ENCODE measurements at regions of chr1 and their contacts with region 1.

Region 1: GRCh38 chr1:6401673-6402072 is 8.1 kb upstream of the ACOT7 start:
- DNase-seq: no peak
- ATAC-seq: no peak
- H3K4me3 ChIP-seq: no peak overlapping the region
- H3K4me3 Mint-ChIP-seq: no peak overlapping the region
- H3K27ac ChIP-seq: no peak overlapping the region
- H3K27ac Mint-ChIP-seq: no peak overlapping the region
- H3K4me1 ChIP-seq: no peaks in the 10 kb centered on the region
- H3K4me1 Mint-ChIP-seq: peaks cover 4% of the 10 kb centered on the region
- H3K27me3 ChIP-seq: no peaks in the 10 kb centered on the region
- H3K27me3 Mint-ChIP-seq: peaks cover 7% of the 10 kb centered on the region
- CTCF ChIP-seq: no peak

Region 2: DNA sequence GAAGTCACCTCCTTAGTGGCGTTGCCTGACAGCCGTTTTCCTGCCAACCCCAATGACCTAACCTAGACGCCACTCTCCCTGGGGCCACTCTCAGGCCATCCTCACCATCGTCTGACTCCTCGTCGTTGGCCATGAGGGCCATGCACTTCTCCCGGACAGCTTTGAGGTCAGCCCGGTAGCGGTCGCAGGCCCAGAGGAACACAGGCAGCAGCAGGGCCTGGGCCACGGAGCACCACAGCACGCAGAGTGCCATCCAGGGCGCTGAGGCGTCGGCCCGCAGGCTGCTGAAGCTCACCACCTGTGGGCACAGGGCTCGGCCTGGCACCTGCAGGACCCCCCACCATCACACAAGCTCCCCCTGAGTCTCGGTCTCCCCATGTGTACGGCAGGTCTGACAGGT is 150.4 kb before region 1 on chr1:
- CTCF ChIA-PET with region 1: interaction called, 128 read pairs
- POLR2A ChIA-PET with region 1: no interaction called
- intact Hi-C with region 1: loop called (anchors 1 kb)
- DNase-seq: no peak
- ATAC-seq: no peak
- H3K4me3 ChIP-seq: no peak overlapping the region
- H3K4me3 Mint-ChIP-seq: no peak overlapping the region
- H3K27ac ChIP-seq: no peak overlapping the region
- H3K27ac Mint-ChIP-seq: no peak overlapping the region
- H3K4me1 ChIP-seq: peaks cover 7% of the 10 kb centered on the region
- H3K4me1 Mint-ChIP-seq: peaks cover 5% of the 10 kb centered on the region
- H3K27me3 ChIP-seq: peaks cover 19 to 21% of the 10 kb centered on the region in 2 experiments
- H3K27me3 Mint-ChIP-seq: peaks cover 33% of the 10 kb centered on the region
- CTCF ChIP-seq: no peak

Region 3: GRCh38 chr1:6343506-6344405 is 57.9 kb before region 1 on chr1:
- CTCF ChIA-PET with region 1: interaction called, 82 read pairs
- POLR2A ChIA-PET with region 1: no interaction called
- intact Hi-C with region 1: loop called (anchors 1 kb)
- DNase-seq: peak; percentile 22 to 73 (median 61)
- ATAC-seq: peak; percentile 63
- H3K4me3 ChIP-seq: no peak overlapping the region
- H3K4me3 Mint-ChIP-seq: no peak overlapping the region
- H3K27ac ChIP-seq: no peak overlapping the region
- H3K27ac Mint-ChIP-seq: no peak overlapping the region
- H3K4me1 ChIP-seq: peaks cover 13% of the 10 kb centered on the region
- H3K4me1 Mint-ChIP-seq: peaks cover 10% of the 10 kb centered on the region
- H3K27me3 ChIP-seq: no peaks in the 10 kb centered on the region
- H3K27me3 Mint-ChIP-seq: no peaks in the 10 kb centered on the region
- CTCF ChIP-seq: peak; percentile 52

Region 4: GRCh38 chr1:6359216-6360116 is 42.2 kb before region 1 on chr1:
- CTCF ChIA-PET with region 1: interaction called, 110 read pairs
- POLR2A ChIA-PET with region 1: interaction called, 3 read pairs
- intact Hi-C with region 1: loop called (anchors 1 kb)
- DNase-seq: peak in 7 of 9 experiments; percentile 34 to 80 (median 63)
- ATAC-seq: peak; percentile 69
- H3K4me3 ChIP-seq: peak overlapping the region; percentile 23 to 51
- H3K4me3 Mint-ChIP-seq: peak overlapping the region; percentile 69
- H3K27ac ChIP-seq: peak overlapping the region; percentile 49 to 80
- H3K27ac Mint-ChIP-seq: peak overlapping the region; percentile 85
- H3K4me1 ChIP-seq: peaks cover 41% of the 10 kb centered on the region
- H3K4me1 Mint-ChIP-seq: peaks cover 37% of the 10 kb centered on the region
- H3K27me3 ChIP-seq: no peaks in the 10 kb centered on the region
- H3K27me3 Mint-ChIP-seq: no peaks in the 10 kb centered on the region
- CTCF ChIP-seq: no peak

Region 5: DNA sequence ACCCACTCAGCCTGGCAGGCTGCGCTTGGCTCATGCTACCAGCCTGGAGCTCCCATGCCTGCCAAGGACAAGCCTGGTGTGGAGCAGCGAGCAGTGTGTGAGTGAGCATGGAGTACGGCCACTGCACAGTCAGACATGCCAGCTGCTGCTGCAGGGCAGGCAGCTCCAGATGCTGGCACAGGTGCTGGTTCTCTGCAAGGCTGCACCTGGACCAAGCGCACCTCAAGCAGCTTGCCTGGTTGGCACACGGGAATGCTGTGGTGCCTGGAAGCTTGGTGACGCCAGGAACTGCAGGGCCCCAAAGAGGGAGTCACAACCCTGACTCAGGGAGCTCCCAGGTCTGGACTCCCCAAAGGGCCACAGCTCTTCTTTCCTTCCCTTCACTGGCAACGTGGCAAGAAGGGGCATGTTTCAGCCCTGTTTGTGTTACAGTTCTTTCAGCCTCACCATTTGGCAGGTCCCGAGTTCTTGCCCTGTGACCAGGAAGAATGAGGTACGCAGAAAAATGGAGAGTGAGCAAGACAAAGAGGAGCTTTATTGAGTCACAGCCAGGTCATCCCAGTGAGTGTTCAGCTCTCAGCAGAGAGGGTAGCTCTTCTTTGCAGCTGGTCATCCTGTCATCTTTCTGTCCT is 34.2 kb before region 1 on chr1:
- CTCF ChIA-PET with region 1: interaction called, 110 read pairs
- POLR2A ChIA-PET with region 1: interaction called, 3 read pairs
- intact Hi-C with region 1: loop called (anchors 1 kb)
- DNase-seq: no peak
- ATAC-seq: no peak
- H3K4me3 ChIP-seq: no peak overlapping the region
- H3K4me3 Mint-ChIP-seq: no peak overlapping the region
- H3K27ac ChIP-seq: no peak overlapping the region
- H3K27ac Mint-ChIP-seq: no peak overlapping the region
- H3K4me1 ChIP-seq: peaks cover 33% of the 10 kb centered on the region
- H3K4me1 Mint-ChIP-seq: peaks cover 23% of the 10 kb centered on the region
- H3K27me3 ChIP-seq: no peaks in the 10 kb centered on the region
- H3K27me3 Mint-ChIP-seq: no peaks in the 10 kb centered on the region
- CTCF ChIP-seq: no peak

Region 6: GRCh38 chr1:6414443-6414844 is 12.8 kb after region 1 on chr1:
- CTCF ChIA-PET with region 1: interaction called, 14 read pairs
- POLR2A ChIA-PET with region 1: no interaction called
- intact Hi-C with region 1: no loop called
- DNase-seq: peak in 4 of 9 experiments; percentile 37 to 61 (median 46)
- ATAC-seq: peak; percentile 77
- H3K4me3 ChIP-seq: no peak overlapping the region
- H3K4me3 Mint-ChIP-seq: no peak overlapping the region
- H3K27ac ChIP-seq: no peak overlapping the region
- H3K27ac Mint-ChIP-seq: no peak overlapping the region
- H3K4me1 ChIP-seq: peaks cover 18% of the 10 kb centered on the region
- H3K4me1 Mint-ChIP-seq: peaks cover 6% of the 10 kb centered on the region
- H3K27me3 ChIP-seq: peaks cover 17 to 45% of the 10 kb centered on the region in 2 experiments
- H3K27me3 Mint-ChIP-seq: peaks cover 53% of the 10 kb centered on the region
- CTCF ChIP-seq: no peak

Region 7: DNA sequence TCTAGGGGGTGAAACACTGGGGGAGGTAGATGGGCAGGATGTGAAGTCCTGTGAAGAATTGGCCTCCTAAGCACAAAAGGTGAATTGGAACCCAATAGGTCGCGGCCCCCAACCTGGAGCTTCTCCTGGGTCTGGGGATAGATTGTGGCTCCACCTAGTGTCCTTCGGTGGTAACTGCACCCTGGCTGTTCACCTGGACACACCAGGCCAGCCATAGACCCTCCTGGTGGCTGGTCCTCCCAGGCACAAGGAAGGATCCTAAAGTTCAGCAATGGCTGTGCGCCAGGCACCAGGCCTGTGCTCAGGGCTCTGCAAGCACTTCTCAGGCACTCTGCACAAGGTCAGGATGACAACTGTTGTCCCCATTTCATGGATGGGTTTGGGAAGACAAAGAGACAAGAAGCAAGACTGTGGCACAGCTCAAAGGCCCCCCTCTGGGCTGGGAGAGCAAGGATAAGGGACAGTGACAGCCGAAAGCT is 36.4 kb after region 1 on chr1:
- CTCF ChIA-PET with region 1: interaction called, 14 read pairs
- POLR2A ChIA-PET with region 1: no interaction called
- intact Hi-C with region 1: no loop called
- DNase-seq: peak; percentile 54 to 82 (median 72)
- ATAC-seq: peak; percentile 75
- H3K4me3 ChIP-seq: no peak overlapping the region
- H3K4me3 Mint-ChIP-seq: no peak overlapping the region
- H3K27ac ChIP-seq: no peak overlapping the region
- H3K27ac Mint-ChIP-seq: no peak overlapping the region
- H3K4me1 ChIP-seq: peaks cover 6% of the 10 kb centered on the region
- H3K4me1 Mint-ChIP-seq: peaks cover 12% of the 10 kb centered on the region
- H3K27me3 ChIP-seq: peaks cover 0 to 8% of the 10 kb centered on the region in 2 experiments
- H3K27me3 Mint-ChIP-seq: peaks cover 26% of the 10 kb centered on the region
- CTCF ChIP-seq: peak; percentile 92

Region 8: DNA sequence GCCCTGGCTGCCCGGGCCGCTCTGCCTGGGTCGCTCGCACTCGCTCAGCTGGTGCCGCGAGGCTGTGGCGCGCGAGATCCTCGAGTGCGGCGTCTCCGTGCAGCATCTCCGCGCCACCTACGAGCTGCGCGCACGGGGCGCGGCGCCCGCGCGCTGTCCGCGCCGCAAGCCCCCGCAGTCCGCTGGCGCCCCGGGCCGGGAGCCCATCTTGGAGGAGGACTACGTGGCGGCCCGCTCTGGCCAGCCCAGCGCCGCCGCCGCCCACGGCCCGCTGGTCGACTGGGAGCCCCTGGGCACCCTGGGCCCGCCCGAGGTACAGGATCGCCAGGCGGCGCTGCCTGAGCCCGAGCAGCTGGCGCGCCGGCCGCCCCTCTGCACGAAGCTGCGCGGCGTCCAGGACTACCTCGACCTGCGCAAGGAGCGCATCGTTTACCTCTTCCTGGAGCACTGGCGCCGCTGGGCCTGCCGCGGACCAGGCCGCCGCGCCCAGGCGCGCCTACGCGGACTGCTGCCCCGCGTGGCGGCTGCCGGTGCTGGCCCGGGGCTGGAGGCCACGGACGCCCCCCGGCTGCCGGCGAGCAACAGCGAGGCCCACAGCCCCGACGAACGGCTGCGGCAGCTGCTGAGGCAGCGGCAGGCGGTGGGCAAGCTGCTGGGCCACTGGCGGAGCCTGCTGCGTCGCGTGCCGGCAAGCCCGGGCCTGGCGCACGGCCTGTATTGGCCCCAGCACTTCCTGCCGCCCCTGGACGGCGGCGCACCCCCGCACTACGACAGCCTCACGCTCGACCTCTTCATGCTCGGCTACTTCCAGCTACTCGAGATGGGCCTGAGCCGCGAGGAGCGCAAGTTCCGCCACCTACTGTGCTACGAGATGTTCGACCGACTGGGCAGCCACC is 53.4 kb after region 1 on chr1:
- CTCF ChIA-PET with region 1: no interaction called
- POLR2A ChIA-PET with region 1: no interaction called
- intact Hi-C with region 1: no loop called
- DNase-seq: peak in 7 of 9 experiments; percentile 38 to 72 (median 48)
- ATAC-seq: peak; percentile 39
- H3K4me3 ChIP-seq: no peak overlapping the region
- H3K4me3 Mint-ChIP-seq: peak overlapping the region; percentile 15
- H3K27ac ChIP-seq: no peak overlapping the region
- H3K27ac Mint-ChIP-seq: no peak overlapping the region
- H3K4me1 ChIP-seq: peaks cover 9% of the 10 kb centered on the region
- H3K4me1 Mint-ChIP-seq: peaks cover 18% of the 10 kb centered on the region
- H3K27me3 ChIP-seq: peaks cover 0 to 4% of the 10 kb centered on the region in 2 experiments
- H3K27me3 Mint-ChIP-seq: peaks cover 25% of the 10 kb centered on the region
- CTCF ChIP-seq: no peak

Measured in CD8-positive, alpha-beta T cell (primary cell).